ENCODE measurements at regions of chr3 and their contacts with region 1.

Region 1: GRCh38 chr3:124552239-124552638 is 178.0 kb upstream of the UMPS start:
- DNase-seq: no peak
- ATAC-seq: no peak
- H3K4me3 ChIP-seq: no peak overlapping the region
- H3K27ac ChIP-seq: no peak overlapping the region
- H3K4me1 ChIP-seq: peaks cover 0 to 3% of the 10 kb centered on the region in 2 experiments; a peak in 1 of 4 replicates
- H3K27me3 ChIP-seq: peaks cover 35% of the 10 kb centered on the region
- CTCF ChIP-seq: no peak
- POLR2A ChIP-seq: no peak
- RAD21 ChIP-seq: no peak

Region 2: GRCh38 chr3:124492811-124493210 is 59.4 kb before region 1 on chr3:
- CTCF ChIA-PET with region 1: interaction called, 4 read pairs
- POLR2A ChIA-PET with region 1: no interaction called
- RAD21 ChIA-PET with region 1: no interaction called
- intact Hi-C with region 1: loop called (anchors 1 kb)
- DNase-seq: peak; percentile 54
- ATAC-seq: peak; percentile 97
- H3K4me3 ChIP-seq: no peak overlapping the region
- H3K27ac ChIP-seq: no peak overlapping the region
- H3K4me1 ChIP-seq: peaks cover 0 to 13% of the 10 kb centered on the region in 2 experiments; a peak in 2 of 4 replicates
- H3K27me3 ChIP-seq: peaks cover 13% of the 10 kb centered on the region; the same call in 1 of the 2 replicates
- CTCF ChIP-seq: peak; percentile 60 to 75 (median 69); a peak in 5 of 6 replicates
- POLR2A ChIP-seq: no peak
- RAD21 ChIP-seq: peak; percentile 57

Region 3: DNA sequence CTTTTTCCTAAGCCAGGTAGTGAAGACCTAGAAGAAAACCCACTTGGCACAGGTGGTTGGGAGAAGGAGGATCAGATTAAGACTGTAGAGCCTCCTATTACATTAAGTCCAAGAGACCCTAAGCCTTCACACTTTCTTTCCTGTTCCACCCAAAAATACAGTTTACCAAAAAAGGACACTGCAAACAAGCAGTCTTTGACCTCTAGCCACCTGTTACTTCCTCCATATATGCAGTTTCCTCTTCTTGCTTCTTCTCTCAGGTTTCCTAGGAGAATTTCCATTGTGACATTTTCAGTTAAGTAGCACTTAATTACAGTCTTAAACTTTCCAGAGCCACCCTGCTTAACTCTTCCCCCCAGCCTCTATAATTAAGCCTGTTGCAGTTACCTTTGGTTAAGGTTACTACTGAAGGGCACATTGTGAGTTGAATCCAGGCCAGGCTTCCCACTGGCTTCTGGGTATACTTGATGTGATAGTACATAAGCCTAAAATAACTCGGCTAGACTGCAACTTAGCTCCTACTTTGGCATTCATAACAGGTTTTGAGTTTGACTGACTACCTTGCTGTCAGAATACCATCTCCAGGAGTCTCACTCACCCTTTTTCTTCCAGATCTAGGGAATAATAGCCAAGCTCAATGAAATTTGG is 63.8 kb after region 1 on chr3:
- CTCF ChIA-PET with region 1: no interaction called
- POLR2A ChIA-PET with region 1: no interaction called
- RAD21 ChIA-PET with region 1: no interaction called
- intact Hi-C with region 1: no loop called
- DNase-seq: no peak
- ATAC-seq: no peak
- H3K4me3 ChIP-seq: no peak overlapping the region
- H3K27ac ChIP-seq: no peak overlapping the region
- H3K4me1 ChIP-seq: peaks cover 7 to 11% of the 10 kb centered on the region in 2 experiments; a peak in 3 of 4 replicates
- H3K27me3 ChIP-seq: no peaks in the 10 kb centered on the region
- CTCF ChIP-seq: no peak
- POLR2A ChIP-seq: no peak
- RAD21 ChIP-seq: no peak

Region 4: DNA sequence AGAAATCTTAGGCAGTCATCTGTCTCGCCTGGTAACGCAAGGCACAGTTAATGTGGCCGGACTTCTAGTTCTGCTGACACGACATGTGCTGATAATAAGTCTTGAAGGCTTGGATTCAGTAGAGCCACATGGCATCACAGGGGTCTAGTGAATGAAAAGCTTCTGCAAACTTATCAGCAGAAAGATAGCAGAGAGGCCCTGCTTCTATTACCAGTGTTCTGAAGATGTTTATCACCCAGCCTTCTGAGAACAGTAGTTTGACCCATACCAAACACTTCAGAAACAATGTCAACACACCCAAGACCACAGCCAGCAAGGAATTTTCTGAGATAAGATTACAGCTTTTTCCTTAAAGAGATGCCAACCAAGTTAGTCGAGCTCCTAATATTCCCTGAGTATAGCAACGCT is 75.3 kb after region 1 on chr3:
- CTCF ChIA-PET with region 1: no interaction called
- POLR2A ChIA-PET with region 1: no interaction called
- RAD21 ChIA-PET with region 1: no interaction called
- intact Hi-C with region 1: no loop called
- DNase-seq: no peak
- ATAC-seq: no peak
- H3K4me3 ChIP-seq: no peak overlapping the region
- H3K27ac ChIP-seq: no peak overlapping the region
- H3K4me1 ChIP-seq: no peaks in the 10 kb centered on the region
- H3K27me3 ChIP-seq: no peaks in the 10 kb centered on the region
- CTCF ChIP-seq: no peak
- POLR2A ChIP-seq: no peak
- RAD21 ChIP-seq: no peak

Region 5: GRCh38 chr3:124650798-124651197 is 98.6 kb after region 1 on chr3:
- CTCF ChIA-PET with region 1: no interaction called
- POLR2A ChIA-PET with region 1: no interaction called
- RAD21 ChIA-PET with region 1: no interaction called
- intact Hi-C with region 1: no loop called
- DNase-seq: no peak
- ATAC-seq: no peak
- H3K4me3 ChIP-seq: no peak overlapping the region
- H3K27ac ChIP-seq: no peak overlapping the region
- H3K4me1 ChIP-seq: no peaks in the 10 kb centered on the region
- H3K27me3 ChIP-seq: no peaks in the 10 kb centered on the region
- CTCF ChIP-seq: no peak
- POLR2A ChIP-seq: no peak
- RAD21 ChIP-seq: no peak